Motor neuron (in vitro differentiated cells): ENCODE measurements at regions of chr17 and their contacts with region 1.

Region 1: DNA sequence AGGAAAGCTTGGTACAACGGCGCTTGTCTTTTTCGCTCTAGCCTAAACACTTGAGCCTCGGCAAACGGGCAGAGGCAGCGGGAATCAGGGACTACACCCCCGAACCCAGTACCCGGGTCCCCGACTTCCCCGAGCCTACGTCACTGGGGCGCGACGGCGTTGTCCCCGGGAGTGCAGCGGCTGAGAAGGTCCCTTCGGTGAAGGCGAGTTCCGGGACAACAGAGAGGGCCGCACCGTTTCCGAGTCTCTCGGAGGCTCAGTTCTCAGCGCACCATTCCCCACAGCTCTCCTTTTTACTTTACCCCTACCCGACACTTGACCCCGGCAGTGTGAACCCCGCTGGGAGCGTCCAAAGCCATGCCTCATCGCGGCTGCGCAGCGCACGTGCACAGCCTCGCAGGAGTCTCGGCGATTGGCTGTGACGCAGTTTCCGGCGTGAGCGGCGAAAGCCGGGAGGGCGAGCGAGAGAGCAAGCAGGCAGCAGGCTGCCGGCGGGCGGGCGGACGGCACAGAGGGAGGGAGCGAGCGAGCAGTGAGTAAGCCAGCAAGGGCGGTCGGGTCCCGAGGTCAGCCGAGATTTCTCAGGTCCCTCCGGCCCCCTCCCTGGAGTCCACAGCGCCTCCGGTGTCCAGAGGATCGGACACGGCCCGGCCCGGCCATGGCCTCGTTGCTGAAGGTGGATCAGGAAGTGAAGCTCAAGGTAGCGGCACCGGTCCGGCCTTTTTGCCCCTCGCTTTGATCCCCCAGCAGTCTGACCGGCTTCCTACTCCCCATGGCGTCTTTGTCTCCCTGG is at the start of gene PSME3:
- ATAC-seq: peak; percentile 89 to 97 (median 95)
- H3K4me3 ChIP-seq: peak within 1 kb of the TSS; percentile 52 to 94 (median 78)
- H3K27ac ChIP-seq: peak within 1 kb of the TSS; percentile 84 to 87
- H3K4me1 ChIP-seq: peaks cover 8 to 13% of the 10 kb centered on the region in 2 donors
- total RNA-seq, gene PSME3: 31.7 to 169 (median 69.6) TPM

Region 2: GRCh38 chr17:42659079-42659931 is 173.9 kb before region 1 on chr17 and contains the start of gene TUBG2:
- in situ Hi-C with region 1: no loop called
- ATAC-seq: peak; percentile 83 to 98 (median 96)
- H3K4me3 ChIP-seq: peak within 1 kb of the TSS; percentile 33 to 50 (median 48)
- H3K27ac ChIP-seq: peak within 1 kb of the TSS; percentile 16 to 48
- H3K4me1 ChIP-seq: peaks cover 7 to 10% of the 10 kb centered on the region in 2 donors
- total RNA-seq, gene TUBG2: 7.1 to 26.7 (median 16.0) TPM

Region 3: GRCh38 chr17:42928714-42929496 is 95.7 kb after region 1 on chr17:
- in situ Hi-C with region 1: loop called in 3 of 9 experiments (anchors 25 kb)
- ATAC-seq: peak in 4 of 8 experiments; percentile 29 to 98 (median 96)
- H3K4me3 ChIP-seq: no peak overlapping the region
- H3K27ac ChIP-seq: no peak overlapping the region
- H3K4me1 ChIP-seq: no peaks in the 10 kb centered on the region